Ascending aorta (tissue), 2 donors: ENCODE measurements at regions of chr20 and their contacts with region 1.

Region 1: DNA sequence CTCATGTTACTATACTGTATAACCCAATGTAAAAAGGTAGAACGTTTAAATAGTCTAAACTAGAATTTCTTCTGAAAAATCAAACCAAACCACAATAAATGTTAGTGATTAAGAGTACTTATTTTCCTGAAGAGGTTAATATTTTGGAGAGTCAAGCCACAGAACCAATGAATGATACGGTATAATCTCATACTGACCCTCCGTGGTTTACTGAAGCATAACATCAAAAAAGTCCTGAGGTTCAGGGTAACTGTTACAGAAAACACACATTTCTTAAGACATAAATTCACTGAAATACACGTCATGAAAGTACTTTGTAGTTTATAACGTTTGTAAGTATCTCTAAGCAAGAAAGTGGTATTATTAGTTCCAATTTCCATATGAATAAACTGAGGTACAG is 28.9 kb downstream of the ESF1 start:
- DNase-seq: no peak
- H3K4me3 ChIP-seq: no peak overlapping the region
- H3K27ac ChIP-seq: peak overlapping the region; percentile 47 to 51
- H3K4me1 ChIP-seq: peaks cover 0 to 2% of the 10 kb centered on the region in 2 donors
- H3K27me3 ChIP-seq: no peaks in the 10 kb centered on the region
- CTCF ChIP-seq: peak in 2 of 3 experiments; percentile 38 to 57

Region 2: DNA sequence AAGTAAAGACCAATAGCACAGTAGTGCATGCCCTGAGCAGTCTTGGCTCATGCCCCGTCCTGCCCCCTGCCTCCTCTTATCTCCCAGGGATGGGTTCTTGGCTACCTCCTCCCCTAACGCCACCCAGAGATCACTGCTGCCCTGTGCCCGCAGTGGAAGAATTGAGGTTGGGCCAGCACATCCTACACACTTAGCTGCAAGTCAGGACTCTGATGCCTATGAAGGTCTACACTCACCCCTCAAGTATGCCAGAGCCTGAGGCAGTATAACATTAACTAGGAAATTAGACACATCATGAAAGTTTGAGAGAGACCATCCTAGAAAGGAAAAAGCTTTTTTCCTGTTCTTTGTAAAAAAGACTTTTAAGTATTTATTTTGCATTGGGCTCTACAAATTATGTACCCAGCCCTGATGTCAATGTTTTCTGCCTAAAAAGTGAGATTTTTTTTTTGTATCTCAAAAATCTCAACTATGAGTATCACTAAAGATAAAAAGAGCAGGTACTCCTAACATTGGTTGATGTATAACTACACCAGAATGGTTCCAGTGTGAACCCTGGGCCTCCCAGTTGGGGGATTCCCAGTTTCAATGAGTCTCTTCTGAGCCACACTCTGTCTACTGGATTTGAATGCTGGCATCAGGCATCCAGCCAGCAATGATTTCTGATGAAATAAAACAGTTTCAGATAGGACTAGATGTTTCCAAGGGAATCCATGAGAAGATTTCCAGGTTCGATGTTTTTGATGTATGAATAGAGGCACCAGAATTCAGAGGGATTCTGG is 419.3 kb before region 1 on chr20:
- intact Hi-C with region 1: loop called (anchors 10 kb)
- DNase-seq: no peak
- H3K4me3 ChIP-seq: no peak overlapping the region
- H3K27ac ChIP-seq: no peak overlapping the region
- H3K4me1 ChIP-seq: no peaks in the 10 kb centered on the region
- H3K27me3 ChIP-seq: no peaks in the 10 kb centered on the region
- CTCF ChIP-seq: no peak

Region 3: DNA sequence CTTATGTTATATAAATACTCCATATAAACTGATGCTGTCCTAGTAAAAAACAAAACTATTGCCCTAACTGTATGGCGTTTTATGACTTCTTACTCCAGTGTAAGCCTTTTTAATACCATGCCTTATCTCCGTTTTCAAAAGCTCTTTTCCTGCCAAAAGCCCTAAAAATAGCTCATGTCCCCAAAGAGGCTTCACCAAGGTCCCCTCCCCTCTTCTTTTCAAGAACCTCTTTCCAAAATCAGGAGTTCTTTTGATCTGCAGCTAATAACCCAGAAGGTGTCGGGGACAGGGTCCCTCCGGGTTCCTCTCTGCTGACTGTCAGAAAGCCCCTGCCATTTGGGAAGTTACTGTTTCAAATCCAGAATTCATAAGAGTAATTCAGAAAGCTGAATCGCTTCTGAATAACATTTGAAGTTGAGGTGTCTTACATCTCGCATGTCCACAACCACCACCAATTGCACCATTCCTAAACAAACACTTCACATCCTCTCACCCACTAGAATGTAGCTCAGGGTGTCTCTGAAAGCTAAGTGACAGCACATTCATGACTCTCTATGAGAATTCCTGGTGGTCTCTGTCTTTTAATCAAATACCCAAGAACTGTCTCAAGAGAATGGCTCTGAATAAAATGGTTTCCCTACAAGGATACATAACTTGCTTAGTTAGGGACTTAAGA is 130.4 kb before region 1 on chr20:
- intact Hi-C with region 1: loop called (anchors 5 kb)
- DNase-seq: no peak
- H3K4me3 ChIP-seq: peak overlapping the region in 1 of 2 donors; percentile 19
- H3K27ac ChIP-seq: peak overlapping the region; percentile 50
- H3K4me1 ChIP-seq: peaks cover 0 to 13% of the 10 kb centered on the region in 2 donors
- H3K27me3 ChIP-seq: no peaks in the 10 kb centered on the region
- CTCF ChIP-seq: no peak

Region 4: DNA sequence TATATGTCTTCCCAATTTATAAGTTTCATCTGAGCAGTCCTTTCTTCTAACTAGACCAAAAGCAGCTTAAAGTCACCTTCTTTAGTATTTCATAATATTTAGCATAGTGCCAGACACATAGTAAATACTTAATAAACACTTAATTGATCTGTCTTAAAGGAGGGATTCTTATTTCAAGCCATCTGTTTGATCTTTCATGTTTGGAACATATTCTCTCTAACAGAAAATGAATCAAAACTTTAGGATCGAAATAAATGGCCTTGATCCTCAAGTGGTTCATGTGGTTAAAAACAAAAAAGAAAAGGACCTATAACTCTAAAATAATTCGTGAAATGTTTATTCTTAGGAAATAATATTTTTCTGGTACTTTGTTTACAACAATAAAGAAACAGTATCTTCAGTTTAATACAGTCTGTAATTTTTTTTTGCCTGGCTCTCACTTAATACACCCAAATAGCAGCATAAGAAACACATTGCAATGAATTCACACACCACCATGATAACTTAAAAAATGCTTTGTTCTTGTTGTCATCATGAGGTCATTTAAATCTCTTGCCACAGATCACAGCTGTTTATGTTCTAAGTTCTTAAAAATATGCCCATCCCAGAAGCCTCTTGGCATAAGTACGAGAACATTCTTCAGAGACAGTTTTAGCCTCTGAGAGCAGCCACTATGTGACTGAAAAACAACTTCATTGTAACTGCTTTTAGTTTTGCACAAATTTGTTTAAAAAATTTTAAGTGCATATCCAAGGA is 19.2 kb before region 1 on chr20:
- intact Hi-C with region 1: no loop called
- DNase-seq: no peak
- H3K4me3 ChIP-seq: no peak overlapping the region
- H3K27ac ChIP-seq: peak overlapping the region; percentile 85 to 88
- H3K4me1 ChIP-seq: peaks cover 0 to 39% of the 10 kb centered on the region in 2 donors
- H3K27me3 ChIP-seq: no peaks in the 10 kb centered on the region
- CTCF ChIP-seq: no peak

Region 5: DNA sequence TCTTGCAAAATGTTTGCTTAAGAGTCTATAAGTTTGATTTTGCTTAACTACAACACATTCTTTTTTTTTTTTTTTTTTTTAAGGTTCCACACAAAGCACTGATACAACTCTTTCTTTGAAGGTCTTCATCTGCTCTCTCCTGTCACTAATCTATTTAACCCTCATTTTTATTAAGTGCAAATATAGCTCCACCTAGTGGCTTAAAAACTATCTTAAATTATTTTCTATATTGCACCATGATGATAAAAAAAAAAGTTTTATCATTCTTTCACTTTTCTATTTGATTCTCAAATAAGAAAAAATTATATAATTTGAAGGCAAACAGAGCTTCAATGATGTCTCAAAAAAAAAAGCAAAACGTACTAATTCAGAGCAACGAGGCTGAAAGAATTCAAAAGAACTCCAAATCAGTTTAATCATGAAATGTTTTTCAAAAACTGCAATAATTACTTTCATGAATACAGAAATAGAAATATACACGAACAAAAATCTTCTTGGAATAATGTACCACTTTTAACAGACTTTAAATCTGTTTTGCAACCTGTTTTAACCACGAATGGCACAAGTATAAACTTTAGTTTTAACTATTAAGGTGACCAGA is 16.1 kb after region 1 on chr20:
- intact Hi-C with region 1: no loop called
- DNase-seq: no peak
- H3K4me3 ChIP-seq: no peak overlapping the region
- H3K27ac ChIP-seq: no peak overlapping the region
- H3K4me1 ChIP-seq: no peaks in the 10 kb centered on the region
- H3K27me3 ChIP-seq: no peaks in the 10 kb centered on the region
- CTCF ChIP-seq: peak; percentile 26 to 52 (median 37)

Region 6: GRCh38 chr20:14829906-14830305 is 1074.1 kb after region 1 on chr20:
- intact Hi-C with region 1: no loop called
- DNase-seq: no peak
- H3K4me3 ChIP-seq: no peak overlapping the region
- H3K27ac ChIP-seq: no peak overlapping the region
- H3K4me1 ChIP-seq: no peaks in the 10 kb centered on the region
- H3K27me3 ChIP-seq: no peaks in the 10 kb centered on the region
- CTCF ChIP-seq: no peak